Gastrocnemius medialis (tissue), 4 donors: ENCODE measurements at regions of chr12 and their contacts with region 1.

Region 1: GRCh38 chr12:46675736-46676135 is 150.1 kb downstream of the SLC38A4 start:
- DNase-seq: no peak
- ATAC-seq: no peak
- H3K4me3 ChIP-seq: no peak overlapping the region
- H3K27ac ChIP-seq: no peak overlapping the region
- H3K4me1 ChIP-seq: peaks cover 27 to 38% of the 10 kb centered on the region in 2 donors
- H3K27me3 ChIP-seq: no peaks in the 10 kb centered on the region
- CTCF ChIP-seq: peak; percentile 60 to 77 (median 72)
- POLR2A ChIP-seq: no peak

Region 2: DNA sequence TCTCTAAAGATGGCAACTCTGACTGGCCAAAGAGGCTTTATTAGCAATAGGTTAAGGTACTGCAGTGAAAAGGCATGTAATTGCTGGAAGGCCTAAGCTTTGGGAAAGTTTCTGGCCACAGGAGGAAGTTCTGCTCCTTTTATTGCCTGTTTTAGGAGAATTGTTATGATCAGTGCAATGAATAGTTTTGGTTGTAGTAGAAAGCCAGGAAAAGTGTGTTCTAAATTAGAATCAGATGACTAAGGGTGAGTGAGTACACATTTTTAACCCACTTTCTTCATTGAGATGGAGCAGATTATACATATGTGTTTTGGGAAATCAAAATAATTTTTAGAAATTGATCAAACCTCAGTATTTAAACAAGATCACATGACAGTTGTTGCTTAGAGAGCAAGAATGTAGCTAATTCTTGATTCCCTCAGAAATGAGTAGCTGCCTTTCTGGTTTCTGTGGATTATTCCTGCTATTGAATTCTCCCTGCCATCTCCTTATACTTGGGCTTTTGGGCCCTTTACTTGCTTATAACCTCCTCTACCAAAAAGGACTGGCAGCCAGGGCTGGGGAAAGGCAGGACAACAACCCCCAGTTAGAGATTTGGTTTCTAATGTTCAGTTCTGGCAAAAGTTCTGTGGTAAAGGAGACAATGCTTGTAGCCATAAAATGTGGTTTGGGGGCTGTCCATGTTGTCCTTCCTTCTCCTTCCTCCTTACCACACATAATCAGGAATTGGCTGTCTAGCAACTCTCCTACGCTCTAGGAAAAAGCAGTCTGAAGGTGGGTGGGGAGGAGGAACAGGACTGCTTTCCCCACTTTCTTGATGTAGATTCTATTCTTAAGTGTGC is 67.1 kb before region 1 on chr12:
- in situ Hi-C with region 1: no loop called
- intact Hi-C with region 1: no loop called
- DNase-seq: no peak
- ATAC-seq: peak in 1 of 2 donors; percentile 63
- H3K4me3 ChIP-seq: no peak overlapping the region
- H3K27ac ChIP-seq: peak overlapping the region; percentile 22 to 44 (median 36)
- H3K4me1 ChIP-seq: peaks cover 11 to 12% of the 10 kb centered on the region in 2 donors
- H3K27me3 ChIP-seq: no peaks in the 10 kb centered on the region
- CTCF ChIP-seq: no peak
- POLR2A ChIP-seq: no peak

Region 3: GRCh38 chr12:46825591-46826414 is 150.1 kb after region 1 on chr12 and contains the start of gene SLC38A4:
- in situ Hi-C with region 1: no loop called
- intact Hi-C with region 1: loop called (anchors 2 kb)
- DNase-seq: peak; percentile 7 to 50
- ATAC-seq: peak; percentile 43 to 53
- H3K4me3 ChIP-seq: peak within 1 kb of the TSS; percentile 39 to 48 (median 44)
- H3K27ac ChIP-seq: peak within 1 kb of the TSS in 3 of 4 donors; percentile 17 to 55 (median 48)
- H3K4me1 ChIP-seq: peaks cover 12 to 29% of the 10 kb centered on the region in 2 donors
- H3K27me3 ChIP-seq: no peaks in the 10 kb centered on the region
- CTCF ChIP-seq: peak in 3 of 5 experiments; percentile 23 to 50 (median 37)
- POLR2A ChIP-seq: no peak
- total RNA-seq, gene SLC38A4: 14.7 to 46.0 (median 23.0) TPM

Region 4: GRCh38 chr12:47190271-47190750 is 514.6 kb after region 1 on chr12:
- in situ Hi-C with region 1: no loop called
- intact Hi-C with region 1: no loop called
- DNase-seq: no peak
- ATAC-seq: no peak
- H3K4me3 ChIP-seq: no peak overlapping the region
- H3K27ac ChIP-seq: no peak overlapping the region
- H3K4me1 ChIP-seq: no peaks in the 10 kb centered on the region
- H3K27me3 ChIP-seq: no peaks in the 10 kb centered on the region
- CTCF ChIP-seq: no peak
- POLR2A ChIP-seq: no peak

Region 5: DNA sequence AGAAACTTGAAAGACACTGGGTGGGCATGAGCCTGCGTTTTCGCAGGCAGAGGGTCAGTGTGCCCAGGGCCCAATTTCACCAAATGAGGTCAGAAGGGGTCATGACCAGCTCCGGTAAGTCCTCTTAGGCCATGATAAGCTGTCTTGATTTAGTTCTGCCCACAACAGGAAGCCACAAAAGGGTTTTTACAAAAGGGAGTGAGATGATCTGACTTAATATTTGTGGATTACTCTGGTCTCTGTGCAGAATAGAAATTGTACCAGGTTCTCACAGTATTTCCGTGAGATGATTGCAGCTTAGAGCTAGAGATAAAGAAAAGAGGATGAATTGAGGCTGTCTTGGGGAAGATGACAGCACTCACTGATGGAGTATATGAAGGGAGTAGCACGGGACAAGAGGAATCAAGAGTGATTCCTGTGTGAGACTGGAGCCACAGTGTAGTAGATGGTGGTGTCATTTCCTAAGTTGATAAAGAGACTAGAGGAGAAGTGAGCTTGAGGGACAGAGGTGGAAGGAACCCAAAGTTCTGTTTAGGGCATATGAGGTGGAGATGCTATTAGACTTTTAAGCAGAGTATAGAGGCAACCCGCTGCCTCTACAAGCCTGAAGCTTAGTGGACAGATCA is 692.3 kb after region 1 on chr12:
- in situ Hi-C with region 1: no loop called
- intact Hi-C with region 1: no loop called
- DNase-seq: no peak
- ATAC-seq: no peak
- H3K4me3 ChIP-seq: no peak overlapping the region
- H3K27ac ChIP-seq: no peak overlapping the region
- H3K4me1 ChIP-seq: no peaks in the 10 kb centered on the region
- H3K27me3 ChIP-seq: no peaks in the 10 kb centered on the region
- CTCF ChIP-seq: no peak
- POLR2A ChIP-seq: no peak